K562 (cell line): ENCODE measurements at regions of chr20 and their contacts with region 1.

Region 1: GRCh38 chr20:39264506-39265172 is 302.5 kb downstream of the DHX35 start:
- DNase-seq: peak; percentile 66 to 78 (median 74)
- ATAC-seq: peak; percentile 88
- H3K4me3 ChIP-seq: no peak overlapping the region
- H3K27ac ChIP-seq: no peak overlapping the region
- H3K4me1 ChIP-seq: no peaks in the 10 kb centered on the region
- H3K27me3 ChIP-seq: no peaks in the 10 kb centered on the region
- CTCF ChIP-seq: peak; percentile 77 to 85 (median 78)
- EP300 ChIP-seq: no peak
- POLR2A ChIP-seq: no peak
- RAD21 ChIP-seq: peak; percentile 16 to 54; a peak in 1 of 4 replicates

Region 2: GRCh38 chr20:39112178-39112743 is 152.4 kb before region 1 on chr20:
- CTCF ChIA-PET with region 1: no interaction called
- POLR2A ChIA-PET with region 1: no interaction called
- in situ Hi-C with region 1: no loop called
- intact Hi-C with region 1: loop called (anchors 5 kb)
- DNase-seq: peak; percentile 63 to 82 (median 69)
- ATAC-seq: peak; percentile 96
- H3K4me3 ChIP-seq: no peak overlapping the region
- H3K27ac ChIP-seq: no peak overlapping the region
- H3K4me1 ChIP-seq: no peaks in the 10 kb centered on the region
- H3K27me3 ChIP-seq: no peaks in the 10 kb centered on the region
- CTCF ChIP-seq: peak; percentile 70 to 86 (median 81)
- EP300 ChIP-seq: no peak
- POLR2A ChIP-seq: no peak
- RAD21 ChIP-seq: peak; percentile 68 to 84

Region 3: DNA sequence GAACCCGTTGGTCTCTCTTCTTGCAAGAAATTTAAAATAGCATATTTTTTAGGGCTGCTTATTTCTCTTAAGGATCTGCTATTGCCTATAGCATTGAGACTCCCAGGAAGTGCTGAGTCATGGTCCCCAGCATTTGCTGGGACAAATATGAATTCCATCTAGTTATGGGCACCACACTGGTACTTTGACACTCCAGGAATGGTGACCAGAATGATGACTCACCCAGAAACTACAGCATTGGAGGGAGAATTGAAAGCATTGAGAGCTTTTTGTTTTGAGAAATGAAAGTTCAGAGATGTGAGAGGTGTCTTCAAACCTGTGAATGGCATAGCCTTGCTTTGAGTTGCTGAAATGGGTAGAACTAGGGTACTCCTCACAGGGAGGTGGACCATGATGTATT is 397.2 kb after region 1 on chr20:
- CTCF ChIA-PET with region 1: no interaction called
- POLR2A ChIA-PET with region 1: no interaction called
- in situ Hi-C with region 1: no loop called
- intact Hi-C with region 1: no loop called
- DNase-seq: no peak
- ATAC-seq: no peak
- H3K4me3 ChIP-seq: no peak overlapping the region
- H3K27ac ChIP-seq: no peak overlapping the region
- H3K4me1 ChIP-seq: no peaks in the 10 kb centered on the region
- H3K27me3 ChIP-seq: no peaks in the 10 kb centered on the region
- CTCF ChIP-seq: no peak
- EP300 ChIP-seq: no peak
- POLR2A ChIP-seq: no peak
- RAD21 ChIP-seq: no peak

Region 4: DNA sequence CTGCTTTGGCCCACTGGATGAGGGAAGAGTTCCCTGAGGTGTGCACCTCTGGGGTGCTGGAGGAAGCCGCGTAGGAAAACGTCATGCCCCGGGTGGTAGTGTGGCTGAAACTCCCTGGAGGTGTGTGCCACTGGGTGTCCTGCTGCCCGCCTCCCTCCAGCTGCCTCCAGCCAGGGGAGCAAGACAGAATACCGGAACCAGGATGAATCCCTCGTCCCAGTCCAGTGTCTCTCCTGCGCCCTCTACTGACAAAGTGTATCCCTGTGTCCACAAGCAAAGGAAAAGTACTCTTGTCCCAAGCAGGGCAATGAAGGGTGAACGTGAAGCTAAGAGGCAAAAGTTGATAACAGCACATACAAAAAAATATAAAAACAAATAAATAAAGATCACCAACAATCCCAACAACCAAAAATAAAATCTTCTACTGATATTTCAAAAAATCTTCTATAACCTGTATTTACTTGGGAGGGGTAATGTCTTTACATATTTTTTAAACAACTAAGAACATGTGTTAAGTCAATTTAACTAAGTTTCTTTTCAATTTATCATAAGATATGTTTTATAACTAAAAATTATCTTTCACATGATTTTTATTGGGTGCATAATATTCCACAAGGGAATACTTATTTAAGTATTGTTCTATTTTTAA is 986.8 kb after region 1 on chr20:
- CTCF ChIA-PET with region 1: no interaction called
- POLR2A ChIA-PET with region 1: no interaction called
- in situ Hi-C with region 1: no loop called
- intact Hi-C with region 1: loop called (anchors 5 kb)
- DNase-seq: peak in 3 of 4 experiments; percentile 8 to 51 (median 27)
- ATAC-seq: peak; percentile 63; the same call in 2 of the 3 replicates
- H3K4me3 ChIP-seq: no peak overlapping the region
- H3K27ac ChIP-seq: no peak overlapping the region
- H3K4me1 ChIP-seq: no peaks in the 10 kb centered on the region
- H3K27me3 ChIP-seq: no peaks in the 10 kb centered on the region
- CTCF ChIP-seq: peak; percentile 40 to 66 (median 47)
- EP300 ChIP-seq: no peak
- POLR2A ChIP-seq: no peak
- RAD21 ChIP-seq: peak in 1 of 2 experiments; percentile 44; a peak in 2 of 4 replicates

Region 5: DNA sequence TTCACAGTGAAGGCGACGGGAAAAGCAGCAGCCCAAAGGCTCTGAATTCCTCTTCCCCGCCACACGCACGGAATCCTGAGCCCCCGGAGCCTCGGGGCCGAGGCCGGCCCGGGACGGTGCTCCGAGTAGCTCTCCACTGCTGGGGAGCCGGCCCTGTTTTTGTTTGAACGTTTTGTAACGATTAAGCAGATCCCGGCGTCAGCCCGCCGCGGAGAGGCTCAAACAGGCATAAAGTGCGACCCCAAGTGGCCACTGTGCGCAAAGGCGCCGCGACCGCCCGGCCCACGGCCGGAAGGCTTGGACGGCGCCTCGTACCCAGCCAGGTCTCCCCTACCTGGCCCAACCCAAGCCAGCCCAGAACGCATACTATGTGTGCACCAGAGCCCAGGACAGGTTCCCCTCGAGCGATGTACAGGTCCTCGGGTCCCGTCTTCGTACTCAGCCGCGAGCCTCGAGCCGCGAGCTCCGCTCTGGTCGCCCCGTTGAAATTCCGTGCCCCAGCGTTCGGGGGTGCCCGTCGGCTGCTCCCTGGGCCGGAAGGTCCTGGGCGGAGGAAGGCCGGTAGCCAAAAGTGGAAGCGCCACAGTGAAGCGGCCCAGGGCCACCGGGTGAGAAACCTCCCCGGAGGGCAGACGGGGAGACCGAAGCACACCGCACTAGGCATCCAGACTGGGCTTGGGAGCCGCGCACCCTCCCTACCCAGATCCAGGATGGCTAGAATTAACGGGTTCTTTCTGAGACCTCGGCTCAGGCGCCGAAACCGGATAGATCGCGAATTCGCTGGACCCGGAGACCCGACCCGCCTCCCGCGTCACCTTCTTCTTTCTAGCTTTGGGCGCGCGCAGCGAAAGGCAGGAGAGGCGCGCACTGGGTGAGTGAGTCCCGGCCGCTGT is 1425.5 kb after region 1 on chr20:
- CTCF ChIA-PET with region 1: no interaction called
- POLR2A ChIA-PET with region 1: no interaction called
- in situ Hi-C with region 1: loop called (anchors 25 kb)
- intact Hi-C with region 1: no loop called
- DNase-seq: peak; percentile 59 to 68 (median 66)
- ATAC-seq: peak; percentile 91
- H3K4me3 ChIP-seq: peak overlapping the region; percentile 9; the same call in 1 of the 2 replicates
- H3K27ac ChIP-seq: no peak overlapping the region
- H3K4me1 ChIP-seq: peaks cover 0 to 25% of the 10 kb centered on the region in 2 experiments; a peak in 2 of 5 replicates
- H3K27me3 ChIP-seq: peaks cover 9 to 37% of the 10 kb centered on the region in 2 experiments; a peak in 3 of 5 replicates
- CTCF ChIP-seq: peak; percentile 67 to 77 (median 72)
- EP300 ChIP-seq: no peak
- POLR2A ChIP-seq: no peak
- RAD21 ChIP-seq: peak; percentile 9 to 57; a peak in 2 of 4 replicates

Region 6: DNA sequence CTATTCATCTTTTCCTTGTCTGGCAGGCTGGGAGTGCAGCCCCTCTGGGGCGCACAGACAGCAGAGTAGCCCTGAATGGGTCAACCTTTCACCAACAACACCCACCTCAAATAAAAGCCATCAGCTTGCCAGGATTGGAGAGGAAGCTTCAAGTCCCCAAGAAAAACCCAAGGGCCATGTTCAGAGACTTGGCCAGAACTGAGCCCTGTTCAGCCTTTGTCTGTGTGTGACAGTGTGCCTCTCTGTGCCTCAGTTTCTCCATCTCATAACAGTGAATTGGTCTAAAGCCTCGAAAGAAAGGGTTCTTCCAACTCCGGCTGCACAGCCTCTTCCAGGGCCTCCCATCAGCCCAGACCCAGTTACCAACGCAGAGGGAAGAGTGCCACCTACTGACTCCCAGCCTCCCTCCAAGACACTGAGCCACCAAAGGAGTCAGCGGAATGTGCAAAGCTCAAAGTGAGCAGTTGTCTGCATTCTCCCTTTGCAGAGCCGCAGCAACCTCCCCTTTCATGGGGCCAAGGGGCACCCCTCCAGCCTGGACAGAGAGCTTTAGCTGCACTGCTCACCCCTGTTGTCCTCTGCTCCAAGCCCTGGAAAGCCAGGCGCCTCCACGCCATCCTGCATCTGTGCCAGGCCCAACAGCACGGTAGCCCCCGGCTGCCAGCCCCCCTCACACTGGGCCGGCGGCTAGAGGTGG is 1681.3 kb after region 1 on chr20:
- CTCF ChIA-PET with region 1: interaction called, 3 read pairs
- POLR2A ChIA-PET with region 1: no interaction called
- in situ Hi-C with region 1: loop called (anchors 25 kb)
- intact Hi-C with region 1: no loop called
- DNase-seq: peak in 2 of 4 experiments; percentile 57 to 59
- ATAC-seq: peak; percentile 94
- H3K4me3 ChIP-seq: no peak overlapping the region
- H3K27ac ChIP-seq: no peak overlapping the region
- H3K4me1 ChIP-seq: peaks cover 3 to 9% of the 10 kb centered on the region in 2 experiments; a peak in 2 of 5 replicates
- H3K27me3 ChIP-seq: peaks cover 20 to 42% of the 10 kb centered on the region in 2 experiments
- CTCF ChIP-seq: peak; percentile 70 to 83 (median 74)
- EP300 ChIP-seq: no peak
- POLR2A ChIP-seq: no peak
- RAD21 ChIP-seq: peak; percentile 54 to 78

Region 7: DNA sequence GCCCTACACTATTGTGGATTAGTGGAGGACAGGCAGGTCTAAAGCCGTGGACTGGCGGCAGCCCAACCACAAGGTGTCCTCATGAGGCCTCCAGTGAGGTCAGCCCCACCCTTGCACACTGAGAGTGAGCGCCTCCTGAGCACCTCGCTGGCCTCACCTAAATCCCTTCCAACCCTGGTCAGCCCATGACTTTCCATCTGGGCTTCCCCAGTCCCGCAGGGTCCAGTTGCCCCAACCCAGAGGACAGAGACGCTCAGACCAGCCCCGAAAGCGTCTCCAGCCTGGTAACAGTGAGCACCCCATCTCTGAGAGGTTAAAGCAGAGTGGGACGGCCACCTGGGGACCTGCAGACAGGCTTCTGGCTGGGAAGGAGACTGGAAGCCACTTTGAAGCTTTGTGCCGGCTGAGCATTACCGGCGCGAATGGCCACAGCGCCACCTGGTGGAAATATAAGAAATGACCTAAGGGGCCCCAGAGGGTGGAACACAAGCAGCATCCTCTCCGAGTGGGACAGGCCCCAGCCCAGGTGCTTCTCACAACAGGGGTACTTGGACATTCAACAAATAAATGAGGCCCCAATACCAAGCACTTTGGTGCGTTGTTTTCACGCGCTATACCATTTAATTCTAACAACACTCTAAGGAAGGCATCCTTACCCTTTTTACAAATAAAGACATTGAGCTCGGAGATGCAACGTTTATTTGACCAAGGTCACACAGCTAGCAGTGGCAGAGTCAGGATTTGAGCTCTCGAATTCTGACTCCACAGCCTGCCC is 1698.3 kb after region 1 on chr20:
- CTCF ChIA-PET with region 1: interaction called, 3 read pairs
- POLR2A ChIA-PET with region 1: no interaction called
- in situ Hi-C with region 1: no loop called
- intact Hi-C with region 1: loop called (anchors 2 kb)
- DNase-seq: peak; percentile 80 to 86 (median 82)
- ATAC-seq: peak; percentile 97
- H3K4me3 ChIP-seq: no peak overlapping the region
- H3K27ac ChIP-seq: no peak overlapping the region
- H3K4me1 ChIP-seq: peaks cover 0 to 4% of the 10 kb centered on the region in 2 experiments; a peak in 1 of 5 replicates
- H3K27me3 ChIP-seq: peaks cover 2 to 19% of the 10 kb centered on the region in 2 experiments; a peak in 3 of 5 replicates
- CTCF ChIP-seq: peak; percentile 84 to 91 (median 90)
- EP300 ChIP-seq: no peak
- POLR2A ChIP-seq: no peak
- RAD21 ChIP-seq: peak; percentile 76 to 83